ENCODE measurements at regions of chr1 and their contacts with region 1.

Region 1: DNA sequence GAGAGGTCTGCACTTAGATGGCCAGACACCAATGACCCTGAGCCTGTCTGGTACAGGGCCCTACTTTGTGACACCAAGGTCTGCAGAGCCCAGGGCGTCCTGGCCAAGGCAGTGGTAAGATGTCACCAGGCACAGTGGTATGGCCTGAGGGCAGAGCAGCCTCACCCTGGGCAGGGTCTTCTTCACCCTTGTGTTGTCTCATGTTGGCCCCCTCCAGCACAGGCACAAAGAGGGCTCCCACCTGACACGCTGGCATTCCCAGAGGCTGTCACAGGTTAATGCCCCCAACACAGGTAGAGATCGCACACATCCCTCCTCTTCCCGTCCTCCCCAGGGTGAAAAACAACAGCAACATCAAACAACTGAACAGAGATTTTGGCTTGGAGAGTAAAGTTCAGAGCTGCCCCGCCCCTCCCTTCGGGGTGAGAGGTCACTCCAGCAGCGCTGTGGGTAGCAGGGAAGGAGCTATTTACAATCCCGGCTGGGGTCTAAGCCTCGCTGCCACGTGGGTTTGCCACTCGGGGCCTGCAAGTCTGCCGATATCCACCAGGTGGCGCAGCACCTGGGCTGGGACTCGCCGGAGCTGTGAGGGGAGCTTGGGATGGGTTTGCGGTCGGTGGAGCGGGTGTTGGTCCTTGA is 12.6 kb downstream of the EFNA3 start:
- DNase-seq: peak; percentile 51 to 79
- H3K4me3 ChIP-seq: no peak overlapping the region
- H3K27ac ChIP-seq: no peak overlapping the region
- H3K4me1 ChIP-seq: 0 out of 2 replicates have a peak, but pooled peaks cover 7% of the 10 kb centered on the region
- H3K27me3 ChIP-seq: no peaks in the 10 kb centered on the region
- CTCF ChIP-seq: peak; percentile 97

Region 2: DNA sequence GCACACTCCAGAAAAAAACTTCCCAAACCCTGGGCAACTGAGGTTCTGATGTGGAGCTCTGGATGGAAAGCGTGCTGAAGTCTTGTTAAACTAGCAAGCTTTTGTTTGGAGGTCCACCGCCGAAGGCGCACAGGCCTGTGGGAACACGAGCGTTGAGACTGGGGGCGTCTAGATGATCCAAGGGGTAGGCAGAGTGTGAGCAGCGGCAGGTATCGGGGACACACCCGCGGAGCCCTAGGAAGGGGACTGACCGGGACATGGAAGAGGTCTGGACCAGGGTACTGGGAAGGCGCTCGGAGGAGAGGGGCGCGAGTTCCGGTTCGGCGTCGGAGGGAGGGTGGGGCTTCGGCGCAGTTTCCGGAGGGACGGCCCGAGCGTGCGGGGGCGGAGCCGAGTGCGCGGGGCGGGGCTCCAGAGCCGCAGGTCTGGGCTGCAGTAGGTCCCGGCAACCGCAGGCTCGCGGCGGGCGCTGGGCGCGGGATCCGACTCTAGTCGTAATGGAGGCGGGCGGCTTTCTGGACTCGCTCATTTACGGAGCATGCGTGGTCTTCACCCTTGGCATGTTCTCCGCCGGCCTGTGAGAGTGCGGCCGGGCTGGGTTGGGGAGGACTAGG is 44.3 kb after region 1 on chr1 and contains the start of gene SLC50A1:
- CTCF ChIA-PET with region 1: interaction called, 3 read pairs
- POLR2A ChIA-PET with region 1: interaction called, 15 read pairs
- intact Hi-C with region 1: no loop called
- DNase-seq: peak; percentile 80 to 94
- H3K4me3 ChIP-seq: peak within 1 kb of the TSS; percentile 78
- H3K27ac ChIP-seq: peak within 1 kb of the TSS; percentile 99
- H3K4me1 ChIP-seq: peaks cover 54% of the 10 kb centered on the region
- H3K27me3 ChIP-seq: no peaks in the 10 kb centered on the region
- CTCF ChIP-seq: 0 out of 2 replicates have a peak, but pooled peaks have one; percentile 15
- total RNA-seq, gene SLC50A1: 54.9 and 67.6 TPM in 2 replicates

Region 3: DNA sequence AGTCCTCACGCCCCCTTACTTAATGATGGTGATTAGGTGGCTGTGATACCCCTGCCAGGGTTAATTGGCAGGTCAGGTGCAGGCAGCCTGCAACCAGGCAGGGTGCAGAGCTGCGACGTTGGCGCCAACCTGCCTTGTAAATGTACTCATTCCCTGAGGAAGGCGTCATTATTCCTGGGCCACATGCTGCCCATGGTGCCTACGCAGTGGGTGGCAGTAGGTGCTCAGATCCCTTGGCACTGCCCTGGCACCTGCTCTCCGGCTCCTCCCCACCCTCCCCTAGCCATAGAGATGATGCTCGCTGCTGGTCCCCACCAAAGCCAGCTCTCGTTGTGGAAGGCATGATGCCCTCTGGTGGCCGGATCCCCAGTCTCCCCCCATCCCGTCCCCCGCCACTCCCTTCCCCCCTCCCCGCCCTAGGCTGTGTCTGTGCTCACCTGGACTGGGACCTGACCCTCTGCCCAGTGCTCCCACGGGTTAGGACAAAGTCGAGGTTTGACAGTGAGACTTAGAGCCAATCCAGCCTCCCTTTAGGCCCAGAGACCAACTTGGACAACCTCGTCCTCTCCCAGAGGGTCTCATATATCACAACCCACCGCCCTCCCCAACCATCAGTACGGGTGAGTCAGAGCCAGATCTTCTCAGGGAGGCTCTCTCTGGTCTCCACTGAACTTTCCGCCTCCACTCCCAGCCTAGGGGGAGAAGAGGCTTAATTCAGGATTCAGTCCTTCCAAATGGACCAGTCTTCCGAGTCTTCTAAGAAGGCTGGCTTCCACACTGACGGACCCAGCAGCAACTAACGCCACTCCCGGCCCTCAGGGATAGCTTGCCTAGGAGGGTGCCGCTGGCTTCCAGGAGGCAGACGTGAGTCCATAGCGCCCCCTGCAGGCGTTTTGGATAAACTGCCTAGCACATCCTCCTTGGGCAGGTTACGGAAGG is 76.2 kb after region 1 on chr1:
- CTCF ChIA-PET with region 1: interaction called, 20 read pairs
- POLR2A ChIA-PET with region 1: no interaction called
- intact Hi-C with region 1: loop called (anchors 1 kb)
- DNase-seq: peak; percentile 66 to 83
- H3K4me3 ChIP-seq: peak overlapping the region; percentile 33; the same call in 1 of the 2 replicates
- H3K27ac ChIP-seq: no peak overlapping the region
- H3K4me1 ChIP-seq: peaks cover 12% of the 10 kb centered on the region
- H3K27me3 ChIP-seq: no peaks in the 10 kb centered on the region
- CTCF ChIP-seq: peak; percentile 98